ENCODE measurements at regions of chr18 and their contacts with region 1.

Region 1: GRCh38 chr18:59837586-59837985 is 62.2 kb upstream of the PMAIP1 start:
- H3K4me3 Mint-ChIP-seq: no peak overlapping the region
- H3K27ac Mint-ChIP-seq: no peak overlapping the region
- H3K4me1 Mint-ChIP-seq: no peaks in the 10 kb centered on the region
- H3K27me3 Mint-ChIP-seq: peaks cover 2% of the 10 kb centered on the region

Region 2: GRCh38 chr18:59927246-59927825 is 89.8 kb after region 1 on chr18:
- intact Hi-C with region 1: loop called (anchors 10 kb)
- H3K4me3 Mint-ChIP-seq: no peak overlapping the region
- H3K27ac Mint-ChIP-seq: peak overlapping the region; percentile 58
- H3K4me1 Mint-ChIP-seq: peaks cover 9% of the 10 kb centered on the region
- H3K27me3 Mint-ChIP-seq: peaks cover 1% of the 10 kb centered on the region

Region 3: DNA sequence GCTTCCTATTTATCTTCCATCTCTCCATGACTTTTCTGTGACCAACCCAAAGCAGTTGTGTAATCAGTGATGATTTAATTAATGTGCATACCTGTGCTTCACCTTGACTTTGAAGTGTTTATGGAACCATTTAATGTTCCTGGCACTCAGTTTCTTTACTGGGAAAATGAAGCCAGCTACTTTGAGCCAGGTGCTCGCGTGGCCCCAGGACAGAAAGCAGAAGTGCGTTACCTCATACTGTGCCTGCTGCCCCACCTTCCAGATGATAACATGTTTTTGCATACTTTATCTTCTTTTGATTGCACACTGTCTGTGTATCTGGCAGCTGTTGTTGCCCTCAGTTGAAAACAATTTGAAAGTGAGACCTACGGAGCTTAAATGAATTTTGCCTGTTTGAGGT is 123.5 kb after region 1 on chr18:
- intact Hi-C with region 1: loop called (anchors 10 kb)
- H3K4me3 Mint-ChIP-seq: no peak overlapping the region
- H3K27ac Mint-ChIP-seq: no peak overlapping the region
- H3K4me1 Mint-ChIP-seq: no peaks in the 10 kb centered on the region
- H3K27me3 Mint-ChIP-seq: peaks cover 9% of the 10 kb centered on the region

Region 4: DNA sequence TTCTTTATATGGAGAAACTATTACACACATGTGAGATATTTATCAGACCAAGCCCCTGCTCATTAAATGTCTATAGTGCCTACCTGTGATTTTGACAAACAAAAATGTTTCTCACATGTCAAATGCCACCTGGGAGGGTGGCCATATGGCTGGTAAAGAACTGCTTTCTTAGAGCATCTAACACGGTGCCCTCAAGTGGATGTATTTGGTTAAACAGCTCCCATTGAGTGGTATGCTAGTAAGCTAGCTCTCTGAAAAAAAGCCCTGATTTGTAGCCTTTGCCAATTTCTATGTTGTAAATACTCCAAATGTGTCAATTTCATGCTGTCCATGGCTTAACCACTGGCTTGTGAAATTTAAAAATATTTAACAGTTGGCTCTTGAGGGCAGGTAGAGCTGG is 156.8 kb after region 1 on chr18:
- intact Hi-C with region 1: loop called (anchors 5 kb)
- H3K4me3 Mint-ChIP-seq: no peak overlapping the region
- H3K27ac Mint-ChIP-seq: no peak overlapping the region
- H3K4me1 Mint-ChIP-seq: no peaks in the 10 kb centered on the region
- H3K27me3 Mint-ChIP-seq: peaks cover 21% of the 10 kb centered on the region

Region 5: GRCh38 chr18:60549338-60549960 is 711.9 kb after region 1 on chr18:
- intact Hi-C with region 1: loop called (anchors 1 kb)
- H3K4me3 Mint-ChIP-seq: no peak overlapping the region
- H3K27ac Mint-ChIP-seq: no peak overlapping the region
- H3K4me1 Mint-ChIP-seq: no peaks in the 10 kb centered on the region
- H3K27me3 Mint-ChIP-seq: no peaks in the 10 kb centered on the region

Measured in dendritic cell treated with granulocyte-macrophage colony-stimulating factor and Interleukin-4, amounts not matched to agents 40 ng/mL and 50 ng/mL, for 4 days (primary cell).